ENCODE measurements at regions of chr11 and their contacts with region 1.

Region 1: DNA sequence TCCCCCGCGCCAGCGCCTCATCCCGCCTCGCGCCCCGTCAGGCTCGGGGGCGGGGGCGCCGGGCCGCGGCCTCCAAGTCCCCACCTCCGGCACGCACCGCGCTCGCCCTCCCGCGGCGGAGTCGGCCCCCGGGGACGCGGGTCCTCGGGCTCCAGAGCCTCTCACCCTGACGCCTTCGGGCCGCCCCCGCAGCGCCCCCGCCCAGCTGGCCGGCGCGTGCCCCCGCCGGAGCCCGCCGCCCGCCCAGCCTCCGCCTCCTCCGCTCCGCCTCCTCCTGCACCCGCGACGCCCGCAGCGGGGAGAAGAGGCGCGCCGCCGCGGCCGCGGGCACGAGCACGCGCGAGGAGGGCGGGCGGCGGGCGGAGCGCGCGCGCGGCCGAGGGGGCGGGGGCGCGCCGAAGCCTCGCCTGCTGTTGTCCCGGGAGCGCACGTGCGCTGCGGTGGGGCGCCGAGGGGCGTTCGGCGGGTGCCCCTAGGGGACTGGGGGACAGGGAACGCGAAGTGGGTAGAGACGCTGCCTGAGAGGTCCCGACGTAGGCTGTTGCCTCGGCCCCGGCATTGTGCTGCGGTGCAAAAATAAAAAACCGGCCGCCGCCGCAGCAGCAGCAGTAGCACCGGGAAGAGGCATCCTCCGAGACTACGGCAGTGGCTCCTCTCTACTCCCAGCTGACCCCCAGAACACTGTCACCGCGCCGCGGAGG is 87.4 kb upstream of the ARHGAP32 start:
- DNase-seq: peak; percentile 83 to 95
- H3K4me3 ChIP-seq: peak overlapping the region; percentile 62 to 70 (median 66)
- H3K27ac ChIP-seq: peak overlapping the region in 4 of 5 donors; percentile 45 to 83 (median 80)
- H3K4me1 ChIP-seq: peaks cover 18 to 63% (median 40%) of the 10 kb centered on the region in 4 donors
- H3K27me3 ChIP-seq: no peaks in the 10 kb centered on the region
- CTCF ChIP-seq: no peak
- EP300 ChIP-seq: no peak
- POLR2A ChIP-seq: no peak

Region 2: DNA sequence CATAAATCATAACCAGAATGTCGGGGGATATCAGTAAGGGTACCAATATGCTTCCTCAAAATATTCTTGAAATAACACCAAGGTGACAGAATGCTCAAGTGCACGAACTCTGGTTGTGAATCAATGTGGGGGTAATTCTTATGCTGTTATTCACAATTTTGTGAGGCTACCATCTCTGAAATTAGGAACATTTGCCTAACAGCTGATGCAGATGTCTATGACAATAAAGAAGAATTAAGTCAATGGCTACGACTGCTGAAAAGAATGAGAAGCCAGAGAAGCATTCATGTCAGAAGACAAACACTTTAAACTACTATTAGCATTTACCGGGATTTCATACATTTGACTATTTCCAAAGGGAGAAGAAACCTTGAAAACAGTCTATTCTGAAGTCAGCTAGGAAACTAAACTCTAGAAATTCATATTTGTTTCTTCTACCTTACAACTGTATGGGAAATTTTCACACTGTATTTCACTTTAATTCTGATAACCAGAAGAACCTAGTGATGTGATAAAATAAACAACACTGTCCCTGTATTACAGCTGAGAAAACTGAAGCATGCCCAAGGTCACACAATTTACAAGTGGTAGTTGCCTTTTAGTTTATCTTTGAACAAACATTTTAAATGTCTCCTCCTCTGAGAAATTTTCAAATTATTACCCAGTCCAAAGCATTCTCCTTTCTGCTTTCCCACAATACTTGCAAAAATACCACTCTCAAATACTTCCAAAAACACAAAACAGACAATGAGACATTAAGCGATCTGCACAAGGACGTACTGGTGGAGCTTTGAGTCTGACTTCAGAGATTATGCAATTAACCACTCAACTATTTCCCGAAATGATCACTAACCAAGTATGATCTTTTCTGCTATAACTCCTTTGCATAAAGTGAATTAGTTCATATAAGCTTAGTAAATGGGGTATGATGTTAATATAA is 69.3 kb before region 1 on chr11:
- intact Hi-C with region 1: no loop called
- DNase-seq: no peak
- H3K4me3 ChIP-seq: no peak overlapping the region
- H3K27ac ChIP-seq: no peak overlapping the region
- H3K4me1 ChIP-seq: peaks cover 0 to 21% (median 6%) of the 10 kb centered on the region in 4 donors
- H3K27me3 ChIP-seq: no peaks in the 10 kb centered on the region
- CTCF ChIP-seq: no peak
- EP300 ChIP-seq: no peak
- POLR2A ChIP-seq: no peak

Region 3: GRCh38 chr11:129323896-129324512 is 44.5 kb after region 1 on chr11:
- intact Hi-C with region 1: loop called (anchors 10 kb)
- DNase-seq: peak; percentile 43 to 84
- H3K4me3 ChIP-seq: peak overlapping the region in 2 of 4 donors; percentile 12 to 28
- H3K27ac ChIP-seq: peak overlapping the region; percentile 37 to 71 (median 63)
- H3K4me1 ChIP-seq: peaks cover 16 to 36% (median 18%) of the 10 kb centered on the region in 4 donors
- H3K27me3 ChIP-seq: no peaks in the 10 kb centered on the region
- CTCF ChIP-seq: no peak
- EP300 ChIP-seq: no peak
- POLR2A ChIP-seq: no peak

Measured in stomach (tissue), 19 donors.